ENCODE measurements at regions of chr15 and their contacts with region 1.

Region 1: GRCh38 chr15:25438601-25439368 is at the start of gene UBE3A:
- DNase-seq: peak; percentile 85 to 90 (median 87)
- H3K4me3 ChIP-seq: peak within 1 kb of the TSS; percentile 67 to 73
- H3K4me3 Mint-ChIP-seq: peak within 1 kb of the TSS; percentile 85 to 98 (median 94)
- H3K27ac ChIP-seq: peak within 1 kb of the TSS; percentile 84
- H3K27ac Mint-ChIP-seq: peak within 1 kb of the TSS; percentile 87 to 97 (median 94)
- H3K4me1 ChIP-seq: peaks cover 43% of the 10 kb centered on the region
- H3K4me1 Mint-ChIP-seq: peaks cover 33 to 43% (median 38%) of the 10 kb centered on the region in 4 donors
- H3K27me3 ChIP-seq: no peaks in the 10 kb centered on the region
- H3K27me3 Mint-ChIP-seq: no peaks in the 10 kb centered on the region
- total RNA-seq, gene UBE3A: 115 to 140 TPM

Region 2: GRCh38 chr15:24956111-24956838 is 482.5 kb before region 1 on chr15:
- CTCF ChIA-PET with region 1: no interaction called
- POLR2A ChIA-PET with region 1: interaction called, 8 read pairs
- intact Hi-C with region 1: loop called (anchors 1 kb)
- DNase-seq: peak; percentile 66 to 84 (median 71)
- H3K4me3 ChIP-seq: peak overlapping the region; percentile 7 to 77
- H3K4me3 Mint-ChIP-seq: peak overlapping the region; percentile 92 to 98 (median 96)
- H3K27ac ChIP-seq: peak overlapping the region; percentile 87
- H3K27ac Mint-ChIP-seq: peak overlapping the region; percentile 94 to 98 (median 97)
- H3K4me1 ChIP-seq: peaks cover 26% of the 10 kb centered on the region
- H3K4me1 Mint-ChIP-seq: peaks cover 5 to 37% (median 22%) of the 10 kb centered on the region in 4 donors
- H3K27me3 ChIP-seq: no peaks in the 10 kb centered on the region
- H3K27me3 Mint-ChIP-seq: peaks cover 0 to 2% of the 10 kb centered on the region in 2 donors

Region 3: GRCh38 chr15:25481207-25481859 is 42.5 kb after region 1 on chr15:
- CTCF ChIA-PET with region 1: no interaction called
- POLR2A ChIA-PET with region 1: no interaction called
- intact Hi-C with region 1: no loop called
- DNase-seq: no peak
- H3K4me3 ChIP-seq: no peak overlapping the region
- H3K4me3 Mint-ChIP-seq: no peak overlapping the region
- H3K27ac ChIP-seq: no peak overlapping the region
- H3K27ac Mint-ChIP-seq: no peak overlapping the region
- H3K4me1 ChIP-seq: no peaks in the 10 kb centered on the region
- H3K4me1 Mint-ChIP-seq: no peaks in the 10 kb centered on the region
- H3K27me3 ChIP-seq: no peaks in the 10 kb centered on the region
- H3K27me3 Mint-ChIP-seq: peaks cover 4% of the 10 kb centered on the region in 2 donors

Region 4: GRCh38 chr15:25611603-25612002 is 172.8 kb after region 1 on chr15:
- CTCF ChIA-PET with region 1: no interaction called
- POLR2A ChIA-PET with region 1: no interaction called
- intact Hi-C with region 1: no loop called
- DNase-seq: no peak
- H3K4me3 ChIP-seq: no peak overlapping the region
- H3K4me3 Mint-ChIP-seq: no peak overlapping the region
- H3K27ac ChIP-seq: no peak overlapping the region
- H3K27ac Mint-ChIP-seq: no peak overlapping the region
- H3K4me1 ChIP-seq: no peaks in the 10 kb centered on the region
- H3K4me1 Mint-ChIP-seq: no peaks in the 10 kb centered on the region
- H3K27me3 ChIP-seq: no peaks in the 10 kb centered on the region
- H3K27me3 Mint-ChIP-seq: peaks cover 0 to 1% of the 10 kb centered on the region in 2 donors

Region 5: DNA sequence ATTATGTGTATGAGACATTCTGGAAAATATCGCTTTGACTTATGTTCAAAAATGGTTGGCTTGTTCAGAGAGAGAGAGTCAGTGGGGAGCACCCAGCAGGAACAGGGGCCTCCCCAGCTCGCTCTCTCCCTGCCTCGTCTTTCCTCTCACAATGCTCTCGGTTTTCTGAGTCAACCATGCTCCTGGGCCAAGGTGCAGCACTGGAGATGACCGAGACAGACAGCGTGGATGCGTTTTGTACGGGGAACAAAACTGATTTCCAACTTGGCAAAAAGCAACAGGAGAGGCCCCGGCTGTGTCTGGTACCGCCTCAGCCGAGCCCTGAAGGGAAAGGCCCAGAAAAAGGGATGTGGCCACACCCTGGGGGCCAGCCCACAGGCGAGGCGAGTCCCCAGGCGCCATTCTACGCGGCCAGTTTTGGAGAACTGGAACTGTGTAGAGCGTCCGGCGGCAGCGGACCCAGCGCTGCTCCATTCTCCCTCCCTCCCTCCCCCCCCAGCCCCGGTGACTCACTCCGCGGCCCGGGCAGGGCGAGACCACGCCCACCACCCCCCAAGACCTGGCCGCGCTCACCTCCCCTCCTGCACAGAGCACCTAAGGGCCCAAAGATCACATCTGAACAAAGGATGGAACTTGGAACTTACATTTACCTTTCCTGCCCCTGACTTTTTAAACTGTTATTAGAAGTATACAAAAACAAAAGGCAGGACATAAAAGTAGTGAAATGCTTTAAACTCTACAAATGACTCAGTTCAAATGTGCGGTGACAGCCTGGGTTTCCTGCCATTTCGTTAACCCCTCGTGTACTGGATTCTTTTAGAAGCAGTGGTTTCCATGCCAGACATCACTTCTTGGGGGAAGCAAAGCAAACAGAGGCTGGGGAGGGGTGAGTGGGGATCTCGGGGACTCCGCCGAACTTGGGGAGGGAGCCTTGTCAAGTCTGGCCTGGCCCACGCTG is 411.6 kb after region 1 on chr15:
- CTCF ChIA-PET with region 1: no interaction called
- POLR2A ChIA-PET with region 1: no interaction called
- intact Hi-C with region 1: loop called (anchors 5 kb)
- DNase-seq: peak; percentile 60 to 82 (median 69)
- H3K4me3 ChIP-seq: peak overlapping the region; percentile 58 to 69
- H3K4me3 Mint-ChIP-seq: peak overlapping the region; percentile 91 to 98 (median 96)
- H3K27ac ChIP-seq: peak overlapping the region; percentile 82
- H3K27ac Mint-ChIP-seq: peak overlapping the region; percentile 96 to 99 (median 98)
- H3K4me1 ChIP-seq: peaks cover 84% of the 10 kb centered on the region
- H3K4me1 Mint-ChIP-seq: peaks cover 68 to 94% (median 81%) of the 10 kb centered on the region in 4 donors
- H3K27me3 ChIP-seq: no peaks in the 10 kb centered on the region
- H3K27me3 Mint-ChIP-seq: no peaks in the 10 kb centered on the region

Region 6: DNA sequence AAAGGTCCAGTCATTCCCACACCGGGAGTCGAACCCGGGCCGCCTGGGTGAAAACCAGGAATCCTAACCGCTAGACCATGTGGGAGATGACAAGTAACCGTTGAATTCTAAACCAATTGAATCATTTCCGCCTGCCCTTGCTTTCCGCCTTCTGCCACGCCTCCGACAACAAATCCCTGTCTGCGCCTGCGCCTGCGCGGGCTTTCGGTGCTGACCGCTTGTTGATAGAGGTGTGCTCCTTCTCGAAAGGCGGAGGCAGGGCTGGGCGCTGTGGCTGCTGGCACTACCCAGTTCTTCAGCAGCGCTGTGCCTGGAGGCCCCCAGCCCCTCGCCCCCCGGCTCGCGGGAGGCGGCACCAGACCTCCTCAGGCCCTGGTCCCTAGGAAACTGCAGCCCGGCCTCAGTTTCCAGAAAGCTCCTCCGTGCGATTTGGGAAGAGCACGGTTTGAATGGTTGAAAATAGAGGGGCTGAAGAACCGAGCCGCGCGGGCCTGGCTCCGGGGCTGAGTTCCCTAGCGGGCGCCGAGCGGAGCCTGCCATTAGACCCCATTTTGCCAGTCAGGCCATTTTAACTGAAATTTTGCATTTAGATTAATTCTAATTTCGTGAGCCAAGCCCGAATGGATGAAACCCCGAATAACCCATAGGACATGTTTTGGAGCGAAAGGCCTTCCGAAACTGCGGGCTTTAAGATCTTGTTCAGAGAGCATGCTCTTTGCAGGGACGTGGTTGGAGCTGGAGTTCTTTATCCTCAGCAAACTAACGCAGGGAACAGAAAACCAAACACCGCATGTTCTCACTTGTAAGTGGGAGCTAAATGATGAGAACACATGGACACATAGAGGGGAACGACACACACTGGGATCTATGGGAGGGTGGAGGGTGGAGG is 643.7 kb after region 1 on chr15:
- CTCF ChIA-PET with region 1: no interaction called
- POLR2A ChIA-PET with region 1: interaction called, 3 read pairs
- intact Hi-C with region 1: loop called (anchors 1 kb)
- DNase-seq: peak; percentile 92 to 96 (median 95)
- H3K4me3 ChIP-seq: peak overlapping the region; percentile 53 to 68
- H3K4me3 Mint-ChIP-seq: peak overlapping the region; percentile 86 to 95 (median 90)
- H3K27ac ChIP-seq: peak overlapping the region; percentile 62
- H3K27ac Mint-ChIP-seq: peak overlapping the region; percentile 94 to 100 (median 97)
- H3K4me1 ChIP-seq: peaks cover 19% of the 10 kb centered on the region
- H3K4me1 Mint-ChIP-seq: peaks cover 25 to 49% (median 41%) of the 10 kb centered on the region in 4 donors
- H3K27me3 ChIP-seq: no peaks in the 10 kb centered on the region
- H3K27me3 Mint-ChIP-seq: peaks cover 0 to 3% of the 10 kb centered on the region in 2 donors

Measured in CD4-positive, alpha-beta memory T cell (primary cell).